CD4-positive, alpha-beta memory T cell (primary cell): ENCODE measurements at regions of chr2 and their contacts with region 1.

Region 1: GRCh38 chr2:148338541-148338940 is 306.0 kb upstream of the EPC2 start:
- DNase-seq: no peak
- H3K4me3 ChIP-seq: no peak overlapping the region
- H3K4me3 Mint-ChIP-seq: no peak overlapping the region
- H3K27ac ChIP-seq: no peak overlapping the region
- H3K27ac Mint-ChIP-seq: peak overlapping the region in 1 of 7 donors; percentile 25
- H3K4me1 ChIP-seq: no peaks in the 10 kb centered on the region
- H3K4me1 Mint-ChIP-seq: peaks cover 0 to 2% (median 0%) of the 10 kb centered on the region in 4 donors
- H3K27me3 ChIP-seq: no peaks in the 10 kb centered on the region
- H3K27me3 Mint-ChIP-seq: no peaks in the 10 kb centered on the region

Region 2: GRCh38 chr2:148430101-148430500 is 91.6 kb after region 1 on chr2:
- CTCF ChIA-PET with region 1: no interaction called
- POLR2A ChIA-PET with region 1: no interaction called
- intact Hi-C with region 1: loop called (anchors 10 kb)
- DNase-seq: no peak
- H3K4me3 ChIP-seq: no peak overlapping the region
- H3K4me3 Mint-ChIP-seq: no peak overlapping the region
- H3K27ac ChIP-seq: no peak overlapping the region
- H3K27ac Mint-ChIP-seq: no peak overlapping the region
- H3K4me1 ChIP-seq: no peaks in the 10 kb centered on the region
- H3K4me1 Mint-ChIP-seq: peaks cover 0 to 19% (median 12%) of the 10 kb centered on the region in 4 donors
- H3K27me3 ChIP-seq: no peaks in the 10 kb centered on the region
- H3K27me3 Mint-ChIP-seq: no peaks in the 10 kb centered on the region

Region 3: GRCh38 chr2:148546270-148546669 is 207.7 kb after region 1 on chr2:
- CTCF ChIA-PET with region 1: no interaction called
- POLR2A ChIA-PET with region 1: no interaction called
- intact Hi-C with region 1: no loop called
- DNase-seq: no peak
- H3K4me3 ChIP-seq: no peak overlapping the region
- H3K4me3 Mint-ChIP-seq: peak overlapping the region in 5 of 8 donors; percentile 25 to 64 (median 40)
- H3K27ac ChIP-seq: no peak overlapping the region
- H3K27ac Mint-ChIP-seq: peak overlapping the region in 3 of 7 donors; percentile 37 to 72 (median 50)
- H3K4me1 ChIP-seq: peaks cover 28% of the 10 kb centered on the region
- H3K4me1 Mint-ChIP-seq: peaks cover 15 to 39% (median 29%) of the 10 kb centered on the region in 4 donors
- H3K27me3 ChIP-seq: no peaks in the 10 kb centered on the region
- H3K27me3 Mint-ChIP-seq: no peaks in the 10 kb centered on the region